ENCODE measurements at regions of chr4 and their contacts with region 1.

Region 1: DNA sequence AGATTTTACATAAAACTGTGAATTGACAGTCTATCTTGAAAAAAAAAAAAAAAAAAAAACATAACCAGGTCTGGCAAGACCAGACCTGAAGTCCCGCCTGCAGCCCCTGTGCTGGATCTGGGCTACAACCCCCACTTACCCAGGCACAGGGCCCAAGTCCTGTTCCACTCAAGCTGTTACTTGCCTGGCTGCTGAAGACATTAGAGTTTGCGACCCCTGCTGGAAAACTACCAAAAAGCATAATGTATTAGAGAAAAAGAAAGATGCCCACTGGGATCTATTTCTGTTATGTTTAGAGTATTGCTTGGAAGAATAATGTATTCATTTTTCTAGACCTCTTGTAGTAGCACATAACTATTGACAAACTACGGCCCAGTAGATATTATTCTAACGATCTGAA is 4.7 kb downstream of the HS3ST1 start:
- DNase-seq: no peak
- ATAC-seq: peak; percentile 62
- H3K4me3 ChIP-seq: no peak overlapping the region
- H3K27ac ChIP-seq: no peak overlapping the region
- H3K4me1 ChIP-seq: no peaks in the 10 kb centered on the region
- H3K27me3 ChIP-seq: peaks cover 2 to 8% of the 10 kb centered on the region in 2 experiments
- CTCF ChIP-seq: peak; percentile 37 to 66 (median 56)
- EP300 ChIP-seq: no peak
- POLR2A ChIP-seq: no peak
- RAD21 ChIP-seq: peak; percentile 75

Region 2: DNA sequence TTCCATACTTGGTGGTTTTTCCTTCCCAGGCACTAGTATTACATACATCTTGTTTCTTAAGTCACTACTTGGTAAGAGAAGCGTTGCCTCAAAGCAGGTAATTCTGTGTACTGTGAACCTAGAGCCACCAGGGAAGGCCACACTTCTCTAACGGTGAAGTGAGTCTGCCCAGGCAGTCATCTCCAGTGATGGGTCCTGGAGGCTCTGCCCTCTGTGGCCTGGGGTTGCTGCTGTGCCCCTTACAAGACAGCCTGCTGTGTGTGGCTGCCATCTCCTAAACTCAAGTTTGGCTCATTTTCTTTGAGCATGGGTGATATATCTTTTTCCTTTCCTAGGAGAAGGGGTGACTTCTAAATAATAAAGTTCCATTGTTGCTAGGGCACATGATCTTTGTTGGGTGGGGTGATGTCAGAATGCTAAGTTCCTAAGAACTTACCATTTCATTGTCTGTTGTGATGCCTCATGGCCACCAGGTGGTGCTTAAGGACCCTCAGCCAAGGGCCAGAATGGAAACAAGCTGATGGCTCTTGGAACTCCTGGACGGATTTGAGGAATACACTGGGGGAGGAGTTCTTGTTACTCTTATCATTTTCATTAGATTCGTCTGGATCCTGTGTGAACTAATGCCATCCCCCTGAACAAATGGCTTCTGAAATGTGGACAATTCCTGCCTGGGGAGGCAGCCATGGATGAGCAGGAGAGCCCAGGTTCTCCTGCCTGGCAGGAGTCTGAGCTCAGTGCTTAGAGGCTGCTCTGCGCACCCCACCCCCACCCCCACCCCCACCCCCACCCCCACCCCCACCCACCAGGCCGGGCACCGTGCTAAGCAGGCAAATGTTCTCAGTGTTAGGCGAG is 1266.3 kb before region 1 on chr4:
- CTCF ChIA-PET with region 1: no interaction called
- POLR2A ChIA-PET with region 1: no interaction called
- RAD21 ChIA-PET with region 1: no interaction called
- SMC1A ChIA-PET with region 1: no interaction called
- in situ Hi-C with region 1: no loop called
- intact Hi-C with region 1: loop called (anchors 5 kb)
- DNase-seq: peak; percentile 9
- ATAC-seq: peak; percentile 89
- H3K4me3 ChIP-seq: no peak overlapping the region
- H3K27ac ChIP-seq: no peak overlapping the region
- H3K4me1 ChIP-seq: no peaks in the 10 kb centered on the region
- H3K27me3 ChIP-seq: no peaks in the 10 kb centered on the region
- CTCF ChIP-seq: peak; percentile 77 to 83 (median 80)
- EP300 ChIP-seq: no peak
- POLR2A ChIP-seq: no peak
- RAD21 ChIP-seq: peak; percentile 88

Region 3: DNA sequence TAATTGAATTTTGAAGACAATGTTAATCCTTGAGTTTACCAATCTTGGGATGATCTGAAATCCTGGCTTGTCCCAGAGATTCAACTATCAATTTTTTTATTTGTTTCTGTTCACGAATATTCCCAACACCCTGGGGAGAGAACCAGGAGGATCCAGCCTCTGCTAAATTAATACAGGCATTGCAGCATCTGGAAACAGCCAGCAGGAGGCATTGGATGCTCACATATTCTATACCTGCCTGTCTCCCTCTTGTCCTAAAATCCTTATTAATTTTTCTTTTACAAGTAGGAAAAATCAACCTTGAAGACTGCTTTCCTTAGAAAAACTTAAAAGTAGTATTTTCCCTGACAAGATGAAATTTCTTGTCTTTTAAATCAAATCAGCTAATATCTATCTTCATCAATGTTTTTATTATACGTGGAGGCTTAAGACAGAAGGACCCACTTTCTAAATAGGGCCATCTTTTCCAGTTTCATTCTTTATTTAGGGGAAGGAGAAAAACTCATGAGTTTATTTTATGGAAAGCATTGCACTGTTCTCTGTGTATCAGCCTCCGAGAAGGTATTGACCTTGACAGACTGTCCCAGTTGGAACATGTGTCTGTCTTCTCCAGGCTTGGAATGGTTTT is 841.8 kb before region 1 on chr4:
- CTCF ChIA-PET with region 1: interaction called, 16 read pairs
- POLR2A ChIA-PET with region 1: no interaction called
- RAD21 ChIA-PET with region 1: interaction called, 6 read pairs
- SMC1A ChIA-PET with region 1: interaction called, 27 read pairs
- in situ Hi-C with region 1: loop called (anchors 5 kb)
- intact Hi-C with region 1: loop called (anchors 1 kb)
- DNase-seq: no peak
- ATAC-seq: peak; percentile 62; the same call in 2 of the 3 replicates
- H3K4me3 ChIP-seq: no peak overlapping the region
- H3K27ac ChIP-seq: no peak overlapping the region
- H3K4me1 ChIP-seq: peaks cover 21% of the 10 kb centered on the region
- H3K27me3 ChIP-seq: no peaks in the 10 kb centered on the region
- CTCF ChIP-seq: peak; percentile 79 to 91 (median 83)
- EP300 ChIP-seq: no peak
- POLR2A ChIP-seq: no peak
- RAD21 ChIP-seq: peak; percentile 97

Region 4: DNA sequence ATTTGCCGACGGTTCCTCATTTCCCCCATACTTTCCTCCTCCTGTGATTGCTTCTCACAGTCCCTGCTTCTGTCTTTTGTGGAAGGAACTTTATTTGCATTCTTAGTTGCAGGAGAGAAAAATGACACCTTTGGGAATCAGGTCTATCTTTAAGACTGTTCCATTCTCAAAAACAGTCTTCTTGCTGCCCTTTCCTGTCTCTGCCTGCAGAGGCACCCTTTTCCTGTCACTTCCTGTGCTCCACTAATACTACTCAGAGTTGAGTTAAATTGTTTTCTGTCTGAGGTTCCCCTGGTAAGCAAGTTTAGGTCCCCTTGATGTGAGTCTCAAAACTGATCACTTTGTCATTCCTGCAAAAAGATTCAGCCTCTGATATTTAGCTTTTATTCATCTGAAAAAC is 530.6 kb before region 1 on chr4:
- CTCF ChIA-PET with region 1: no interaction called
- POLR2A ChIA-PET with region 1: no interaction called
- RAD21 ChIA-PET with region 1: no interaction called
- SMC1A ChIA-PET with region 1: no interaction called
- in situ Hi-C with region 1: no loop called
- intact Hi-C with region 1: loop called (anchors 5 kb)
- DNase-seq: peak; percentile 7
- ATAC-seq: peak; percentile 89
- H3K4me3 ChIP-seq: no peak overlapping the region
- H3K27ac ChIP-seq: no peak overlapping the region
- H3K4me1 ChIP-seq: no peaks in the 10 kb centered on the region
- H3K27me3 ChIP-seq: no peaks in the 10 kb centered on the region
- CTCF ChIP-seq: peak; percentile 38 to 57 (median 56); a peak in 5 of 6 replicates
- EP300 ChIP-seq: no peak
- POLR2A ChIP-seq: no peak
- RAD21 ChIP-seq: peak; percentile 66

Region 5: DNA sequence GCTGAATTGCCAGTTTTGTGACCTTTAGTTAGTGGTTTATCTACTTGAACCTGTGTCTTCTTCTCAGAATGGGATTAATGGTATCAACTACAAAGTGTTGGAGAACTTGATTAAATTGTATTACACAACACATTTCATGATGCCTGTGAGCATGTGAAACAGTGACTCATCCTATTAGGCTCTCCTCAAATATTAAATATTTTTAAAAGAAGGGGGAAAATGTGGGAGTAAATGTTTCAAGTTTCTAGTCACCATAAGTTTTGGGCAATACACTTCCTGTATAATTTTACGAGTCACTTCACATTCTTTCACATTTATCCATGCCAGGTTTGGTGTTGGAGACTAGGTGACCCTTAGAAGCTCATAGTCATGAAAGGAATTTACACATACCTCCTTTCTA is 142.3 kb before region 1 on chr4:
- CTCF ChIA-PET with region 1: no interaction called
- POLR2A ChIA-PET with region 1: no interaction called
- RAD21 ChIA-PET with region 1: no interaction called
- SMC1A ChIA-PET with region 1: no interaction called
- in situ Hi-C with region 1: no loop called
- intact Hi-C with region 1: no loop called
- DNase-seq: no peak
- ATAC-seq: no peak
- H3K4me3 ChIP-seq: no peak overlapping the region
- H3K27ac ChIP-seq: no peak overlapping the region
- H3K4me1 ChIP-seq: no peaks in the 10 kb centered on the region; the same call in 1 of the 2 replicates
- H3K27me3 ChIP-seq: no peaks in the 10 kb centered on the region
- CTCF ChIP-seq: no peak
- EP300 ChIP-seq: no peak
- POLR2A ChIP-seq: no peak
- RAD21 ChIP-seq: no peak

Region 6: GRCh38 chr4:11341337-11342043 is 82.5 kb before region 1 on chr4:
- CTCF ChIA-PET with region 1: no interaction called
- POLR2A ChIA-PET with region 1: no interaction called
- RAD21 ChIA-PET with region 1: interaction called, 3 read pairs
- SMC1A ChIA-PET with region 1: no interaction called
- in situ Hi-C with region 1: no loop called
- intact Hi-C with region 1: loop called (anchors 5 kb)
- DNase-seq: no peak
- ATAC-seq: peak; percentile 80
- H3K4me3 ChIP-seq: no peak overlapping the region
- H3K27ac ChIP-seq: no peak overlapping the region
- H3K4me1 ChIP-seq: peaks cover 16% of the 10 kb centered on the region
- H3K27me3 ChIP-seq: no peaks in the 10 kb centered on the region
- CTCF ChIP-seq: no peak
- EP300 ChIP-seq: no peak
- POLR2A ChIP-seq: no peak
- RAD21 ChIP-seq: no peak

Region 7: GRCh38 chr4:11436673-11437072 is 12.7 kb after region 1 on chr4:
- CTCF ChIA-PET with region 1: interaction called, 13 read pairs
- POLR2A ChIA-PET with region 1: no interaction called
- RAD21 ChIA-PET with region 1: interaction called, 6 read pairs
- SMC1A ChIA-PET with region 1: interaction called, 6 read pairs
- in situ Hi-C with region 1: no loop called
- intact Hi-C with region 1: no loop called
- DNase-seq: no peak
- ATAC-seq: no peak
- H3K4me3 ChIP-seq: no peak overlapping the region
- H3K27ac ChIP-seq: no peak overlapping the region
- H3K4me1 ChIP-seq: peaks cover 9% of the 10 kb centered on the region; the same call in 1 of the 2 replicates
- H3K27me3 ChIP-seq: no peaks in the 10 kb centered on the region
- CTCF ChIP-seq: no peak
- EP300 ChIP-seq: no peak
- POLR2A ChIP-seq: no peak
- RAD21 ChIP-seq: no peak

Region 8: GRCh38 chr4:11455201-11455835 is 31.3 kb after region 1 on chr4:
- CTCF ChIA-PET with region 1: no interaction called
- POLR2A ChIA-PET with region 1: no interaction called
- RAD21 ChIA-PET with region 1: no interaction called
- SMC1A ChIA-PET with region 1: no interaction called
- in situ Hi-C with region 1: no loop called
- intact Hi-C with region 1: no loop called
- DNase-seq: no peak
- ATAC-seq: no peak
- H3K4me3 ChIP-seq: no peak overlapping the region
- H3K27ac ChIP-seq: no peak overlapping the region
- H3K4me1 ChIP-seq: no peaks in the 10 kb centered on the region; the same call in 1 of the 2 replicates
- H3K27me3 ChIP-seq: no peaks in the 10 kb centered on the region
- CTCF ChIP-seq: no peak
- EP300 ChIP-seq: no peak
- POLR2A ChIP-seq: no peak
- RAD21 ChIP-seq: no peak